MCF 10A (cell line): ENCODE measurements at regions of chr6 and their contacts with region 1.

Region 1: DNA sequence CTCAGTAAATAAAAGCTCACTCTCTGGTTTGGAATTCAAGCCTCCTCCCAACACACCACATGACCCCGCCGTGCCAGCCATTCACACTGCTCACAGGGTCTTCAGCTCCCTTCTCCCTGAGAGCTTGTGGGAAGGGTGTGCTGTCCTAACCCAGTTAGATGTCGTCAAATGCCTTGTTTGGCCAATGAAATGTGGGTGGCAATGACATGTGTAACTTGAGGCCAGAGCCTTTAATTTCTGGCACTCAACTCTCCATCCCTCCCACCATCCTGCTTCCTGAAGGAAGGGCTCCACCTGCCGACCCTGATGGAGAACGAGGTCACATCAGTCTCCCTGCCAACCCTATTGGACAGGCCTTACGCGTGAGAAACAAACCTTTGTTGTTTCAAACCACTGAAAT is 224.5 kb upstream of the AGPAT4 start:
- DNase-seq: peak; percentile 80
- H3K4me3 Mint-ChIP-seq: no peak overlapping the region
- H3K27ac Mint-ChIP-seq: peak overlapping the region; percentile 53
- H3K4me1 Mint-ChIP-seq: peaks cover 5% of the 10 kb centered on the region
- H3K27me3 Mint-ChIP-seq: no peaks in the 10 kb centered on the region
- CTCF ChIP-seq: peak; percentile 62

Region 2: DNA sequence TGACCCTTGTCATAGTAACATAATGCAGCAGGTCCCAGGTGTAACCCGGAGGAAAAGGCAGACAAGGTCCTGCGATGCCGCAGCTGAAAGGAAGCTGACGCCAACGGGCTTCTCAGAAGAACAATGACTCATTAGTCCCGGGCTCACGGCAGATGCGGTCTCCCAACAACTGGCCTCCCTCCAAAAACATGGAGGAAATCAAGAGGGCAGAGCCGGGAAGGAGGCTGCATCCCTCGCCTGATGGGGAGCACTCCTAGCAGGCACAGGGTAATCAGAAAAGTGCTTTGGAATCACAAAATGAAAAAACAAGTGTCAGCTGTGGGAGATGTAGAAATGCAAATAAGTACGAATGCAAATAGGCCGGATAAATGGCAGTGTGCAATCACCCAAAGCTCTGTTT is 59.3 kb before region 1 on chr6:
- CTCF ChIA-PET with region 1: interaction called, 12 read pairs
- POLR2A ChIA-PET with region 1: no interaction called
- intact Hi-C with region 1: no loop called
- DNase-seq: peak; percentile 97
- H3K4me3 Mint-ChIP-seq: peak overlapping the region; percentile 40
- H3K27ac Mint-ChIP-seq: peak overlapping the region; percentile 53
- H3K4me1 Mint-ChIP-seq: peaks cover 18% of the 10 kb centered on the region
- H3K27me3 Mint-ChIP-seq: no peaks in the 10 kb centered on the region
- CTCF ChIP-seq: no peak

Region 3: GRCh38 chr6:161486361-161487216 is 11.8 kb before region 1 on chr6:
- CTCF ChIA-PET with region 1: interaction called, 15 read pairs
- POLR2A ChIA-PET with region 1: interaction called, 5 read pairs
- intact Hi-C with region 1: no loop called
- DNase-seq: peak; percentile 84
- H3K4me3 Mint-ChIP-seq: no peak overlapping the region
- H3K27ac Mint-ChIP-seq: peak overlapping the region; percentile 23
- H3K4me1 Mint-ChIP-seq: peaks cover 8% of the 10 kb centered on the region
- H3K27me3 Mint-ChIP-seq: no peaks in the 10 kb centered on the region
- CTCF ChIP-seq: no peak

Region 4: GRCh38 chr6:161561908-161562307 is 63.5 kb after region 1 on chr6:
- CTCF ChIA-PET with region 1: no interaction called
- POLR2A ChIA-PET with region 1: no interaction called
- intact Hi-C with region 1: no loop called
- DNase-seq: no peak
- H3K4me3 Mint-ChIP-seq: no peak overlapping the region
- H3K27ac Mint-ChIP-seq: no peak overlapping the region
- H3K4me1 Mint-ChIP-seq: no peaks in the 10 kb centered on the region
- H3K27me3 Mint-ChIP-seq: no peaks in the 10 kb centered on the region
- CTCF ChIP-seq: no peak

Region 5: GRCh38 chr6:161694995-161695394 is 196.6 kb after region 1 on chr6:
- CTCF ChIA-PET with region 1: interaction called, 3 read pairs
- POLR2A ChIA-PET with region 1: no interaction called
- intact Hi-C with region 1: loop called (anchors 2 kb)
- DNase-seq: peak; percentile 45
- H3K4me3 Mint-ChIP-seq: no peak overlapping the region
- H3K27ac Mint-ChIP-seq: no peak overlapping the region
- H3K4me1 Mint-ChIP-seq: no peaks in the 10 kb centered on the region
- H3K27me3 Mint-ChIP-seq: no peaks in the 10 kb centered on the region
- CTCF ChIP-seq: peak; percentile 35